K562 (cell line): ENCODE measurements at regions of chr9 and their contacts with region 1.

Region 1: GRCh38 chr9:97501177-97501971 is at the start of gene TMOD1:
- DNase-seq: peak; percentile 86 to 98 (median 98)
- ATAC-seq: peak; percentile 73
- H3K4me3 ChIP-seq: peak within 1 kb of the TSS; percentile 88
- H3K27ac ChIP-seq: peak within 1 kb of the TSS; percentile 96
- H3K4me1 ChIP-seq: peaks cover 44 to 50% of the 10 kb centered on the region in 2 experiments
- H3K27me3 ChIP-seq: no peaks in the 10 kb centered on the region; a peak in 1 of 5 replicates
- CTCF ChIP-seq: peak; percentile 18 to 55 (median 38); a peak in 4 of 6 replicates
- EP300 ChIP-seq: no peak
- POLR2A ChIP-seq: no peak
- RAD21 ChIP-seq: peak in 1 of 2 experiments; percentile 26; a peak in 2 of 4 replicates
- polyA plus RNA-seq, gene TMOD1: 11.6 to 14.2 TPM

Region 2: DNA sequence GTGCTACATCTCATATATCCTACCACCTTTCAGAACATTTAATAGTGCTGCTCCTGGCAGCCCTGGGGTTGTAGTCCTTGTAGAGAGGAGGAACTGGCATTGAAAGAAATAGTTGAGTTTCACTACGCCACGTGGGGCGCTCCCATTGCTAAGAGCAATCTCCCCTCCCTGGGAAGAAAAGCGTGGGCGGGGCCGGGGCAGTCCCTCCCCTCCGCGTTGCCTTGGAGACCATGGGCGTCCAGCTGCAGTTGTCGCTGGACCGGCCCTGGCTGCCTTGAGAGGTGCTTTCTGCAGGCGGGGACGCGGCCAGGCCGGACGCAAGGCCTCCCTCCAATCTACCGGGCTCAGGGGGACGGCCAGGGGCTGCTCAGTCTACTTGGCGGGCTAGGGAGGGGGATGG is 194.3 kb before region 1 on chr9:
- CTCF ChIA-PET with region 1: no interaction called
- POLR2A ChIA-PET with region 1: no interaction called
- in situ Hi-C with region 1: no loop called
- intact Hi-C with region 1: no loop called
- DNase-seq: peak; percentile 58 to 75 (median 64)
- ATAC-seq: peak; percentile 95
- H3K4me3 ChIP-seq: no peak overlapping the region
- H3K27ac ChIP-seq: no peak overlapping the region
- H3K4me1 ChIP-seq: peaks cover 0 to 10% of the 10 kb centered on the region in 2 experiments; a peak in 3 of 5 replicates
- H3K27me3 ChIP-seq: no peaks in the 10 kb centered on the region
- CTCF ChIP-seq: peak in 1 of 3 experiments; percentile 23; a peak in 2 of 6 replicates
- EP300 ChIP-seq: no peak
- POLR2A ChIP-seq: no peak
- RAD21 ChIP-seq: no peak

Region 3: DNA sequence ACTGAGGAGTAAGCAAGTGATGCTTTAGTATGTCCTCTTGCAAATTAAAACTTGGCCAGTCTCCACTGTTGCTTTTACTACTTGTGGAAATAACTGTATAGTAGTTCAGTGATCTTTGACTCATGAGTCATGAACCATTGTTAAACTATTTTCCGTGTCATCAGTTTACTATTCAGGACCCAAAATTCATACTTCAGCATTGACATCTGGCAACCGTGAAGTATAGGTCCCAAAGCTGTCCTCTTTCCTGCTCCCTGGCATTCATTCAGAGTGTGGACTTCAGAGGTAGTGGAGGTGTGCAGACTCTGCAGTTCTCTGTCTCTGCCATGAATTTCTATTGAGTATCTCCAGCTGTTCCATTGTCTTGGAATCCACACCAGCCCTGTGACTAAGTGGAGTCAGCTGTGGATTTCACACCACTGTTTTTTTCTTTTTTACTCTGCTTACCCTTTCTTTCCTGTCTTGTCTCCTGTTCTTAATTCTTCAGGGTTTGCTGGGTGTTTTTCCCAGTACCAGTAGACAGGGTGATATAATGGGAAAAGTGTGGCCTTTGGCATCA is 82.0 kb before region 1 on chr9:
- CTCF ChIA-PET with region 1: no interaction called
- POLR2A ChIA-PET with region 1: no interaction called
- in situ Hi-C with region 1: no loop called
- intact Hi-C with region 1: loop called (anchors 5 kb)
- DNase-seq: no peak
- ATAC-seq: no peak; the same call in 2 of the 3 replicates
- H3K4me3 ChIP-seq: no peak overlapping the region
- H3K27ac ChIP-seq: no peak overlapping the region
- H3K4me1 ChIP-seq: 0 out of 5 replicates have a peak, but pooled peaks cover 0 to 6% of the 10 kb centered on the region in 2 experiments
- H3K27me3 ChIP-seq: no peaks in the 10 kb centered on the region
- CTCF ChIP-seq: no peak
- EP300 ChIP-seq: no peak
- POLR2A ChIP-seq: no peak
- RAD21 ChIP-seq: no peak

Region 4: DNA sequence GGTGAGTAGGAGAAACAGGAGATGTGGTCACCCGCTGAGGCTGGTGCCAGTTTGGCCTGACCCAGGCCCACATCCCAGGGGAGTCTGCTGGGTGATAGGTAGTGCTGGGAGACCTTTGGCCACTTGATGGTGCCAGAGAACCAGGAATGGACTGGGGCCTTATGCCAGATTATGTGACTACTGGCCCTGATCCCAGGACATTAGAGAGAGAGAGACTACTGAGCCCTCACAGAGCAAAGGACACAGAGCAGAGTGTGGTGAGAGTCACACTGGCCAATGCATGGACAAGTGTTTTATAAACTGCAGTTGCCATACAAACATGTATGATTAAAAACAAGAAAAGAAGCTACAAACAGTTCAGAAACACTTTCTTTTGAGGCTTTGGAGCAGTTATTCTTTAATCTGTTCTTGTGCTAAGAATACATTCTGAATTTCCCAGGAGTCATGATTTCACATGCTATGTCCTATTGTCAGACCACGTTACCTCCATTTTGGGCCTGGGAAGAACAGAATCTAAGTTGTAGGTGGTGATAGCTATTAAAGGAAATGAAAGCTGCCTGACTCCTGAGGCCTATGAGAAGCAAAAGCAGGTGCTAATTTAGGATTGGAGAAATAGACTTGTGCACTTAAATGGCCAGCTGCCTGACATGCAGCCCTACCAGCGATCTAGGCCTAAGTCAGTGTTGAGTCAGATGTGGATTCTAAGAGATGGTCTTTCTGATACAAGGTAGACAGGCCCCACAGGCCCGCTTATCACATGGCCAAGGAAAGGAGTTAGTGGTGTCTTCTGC is 32.5 kb before region 1 on chr9:
- CTCF ChIA-PET with region 1: no interaction called
- POLR2A ChIA-PET with region 1: interaction called, 8 read pairs
- in situ Hi-C with region 1: no loop called
- intact Hi-C with region 1: loop called (anchors 1 kb)
- DNase-seq: peak; percentile 65 to 88 (median 78)
- ATAC-seq: peak; percentile 100
- H3K4me3 ChIP-seq: no peak overlapping the region
- H3K27ac ChIP-seq: no peak overlapping the region
- H3K4me1 ChIP-seq: peaks cover 0 to 8% of the 10 kb centered on the region in 2 experiments; a peak in 2 of 5 replicates
- H3K27me3 ChIP-seq: no peaks in the 10 kb centered on the region
- CTCF ChIP-seq: peak; percentile 90 to 96 (median 96)
- EP300 ChIP-seq: no peak
- POLR2A ChIP-seq: no peak
- RAD21 ChIP-seq: peak; percentile 92 to 97

Region 5: DNA sequence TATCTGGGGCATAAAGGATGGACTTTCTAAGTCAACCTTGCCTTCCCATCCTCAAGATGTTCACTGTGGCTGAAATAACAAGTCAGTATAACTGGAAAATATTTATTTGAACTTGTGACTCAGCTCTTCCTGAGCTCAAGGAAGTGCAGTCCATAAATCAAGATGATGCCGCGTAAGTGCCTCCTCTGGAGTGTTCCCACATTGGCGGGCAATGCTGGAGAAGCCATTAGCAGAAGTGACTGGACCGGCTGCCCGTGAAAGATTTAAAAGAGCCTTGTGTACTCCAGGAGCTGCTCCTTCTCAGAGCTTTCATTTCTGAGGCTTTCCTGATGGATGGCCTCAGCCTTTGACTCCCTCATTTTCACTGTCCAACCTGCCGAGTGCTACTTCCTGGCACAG is 17.5 kb after region 1 on chr9:
- CTCF ChIA-PET with region 1: no interaction called
- POLR2A ChIA-PET with region 1: interaction called, 29 read pairs
- in situ Hi-C with region 1: no loop called
- intact Hi-C with region 1: no loop called
- DNase-seq: peak in 2 of 4 experiments; percentile 59 to 61
- ATAC-seq: peak; percentile 72
- H3K4me3 ChIP-seq: no peak overlapping the region
- H3K27ac ChIP-seq: no peak overlapping the region
- H3K4me1 ChIP-seq: peaks cover 16 to 32% of the 10 kb centered on the region in 2 experiments
- H3K27me3 ChIP-seq: no peaks in the 10 kb centered on the region
- CTCF ChIP-seq: no peak
- EP300 ChIP-seq: peak; percentile 6; the same call in 1 of the 2 replicates
- POLR2A ChIP-seq: no peak
- RAD21 ChIP-seq: no peak

Region 6: DNA sequence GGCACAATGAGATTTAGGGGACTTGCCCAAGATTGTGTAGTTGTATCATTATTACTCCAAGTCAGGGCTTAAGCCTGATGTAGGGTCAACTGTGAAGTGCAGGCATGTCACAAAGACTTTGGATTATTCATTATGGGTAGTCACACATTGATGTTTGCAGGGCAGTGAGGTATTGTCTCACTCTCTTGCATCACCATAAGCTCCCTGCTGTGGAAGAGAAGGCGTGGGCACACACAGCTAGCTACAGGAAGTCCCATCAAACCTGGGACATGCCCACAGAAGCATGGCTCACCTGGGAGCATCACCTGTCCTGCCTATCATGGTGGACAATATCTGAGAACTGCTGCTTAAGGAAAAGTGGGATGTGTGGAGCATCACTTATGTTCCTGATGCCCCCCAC is 42.2 kb after region 1 on chr9:
- CTCF ChIA-PET with region 1: no interaction called
- POLR2A ChIA-PET with region 1: no interaction called
- in situ Hi-C with region 1: no loop called
- intact Hi-C with region 1: loop called (anchors 5 kb)
- DNase-seq: no peak
- ATAC-seq: no peak
- H3K4me3 ChIP-seq: no peak overlapping the region
- H3K27ac ChIP-seq: no peak overlapping the region
- H3K4me1 ChIP-seq: peaks cover 0 to 2% of the 10 kb centered on the region in 2 experiments; a peak in 1 of 5 replicates
- H3K27me3 ChIP-seq: no peaks in the 10 kb centered on the region
- CTCF ChIP-seq: no peak
- EP300 ChIP-seq: no peak
- POLR2A ChIP-seq: no peak
- RAD21 ChIP-seq: no peak